ENCODE measurements at regions of chr16 and their contacts with region 1.

Region 1: GRCh38 chr16:8878521-8878911 is 3.6 kb upstream of the LITAFD start:
- DNase-seq: no peak
- ATAC-seq: no peak
- H3K4me3 ChIP-seq: no peak overlapping the region
- H3K4me3 Mint-ChIP-seq: no peak overlapping the region
- H3K27ac ChIP-seq: no peak overlapping the region
- H3K27ac Mint-ChIP-seq: no peak overlapping the region
- H3K4me1 ChIP-seq: peaks cover 9% of the 10 kb centered on the region
- H3K4me1 Mint-ChIP-seq: peaks cover 19% of the 10 kb centered on the region
- H3K27me3 ChIP-seq: no peaks in the 10 kb centered on the region
- H3K27me3 Mint-ChIP-seq: no peaks in the 10 kb centered on the region
- CTCF ChIP-seq: no peak

Region 2: DNA sequence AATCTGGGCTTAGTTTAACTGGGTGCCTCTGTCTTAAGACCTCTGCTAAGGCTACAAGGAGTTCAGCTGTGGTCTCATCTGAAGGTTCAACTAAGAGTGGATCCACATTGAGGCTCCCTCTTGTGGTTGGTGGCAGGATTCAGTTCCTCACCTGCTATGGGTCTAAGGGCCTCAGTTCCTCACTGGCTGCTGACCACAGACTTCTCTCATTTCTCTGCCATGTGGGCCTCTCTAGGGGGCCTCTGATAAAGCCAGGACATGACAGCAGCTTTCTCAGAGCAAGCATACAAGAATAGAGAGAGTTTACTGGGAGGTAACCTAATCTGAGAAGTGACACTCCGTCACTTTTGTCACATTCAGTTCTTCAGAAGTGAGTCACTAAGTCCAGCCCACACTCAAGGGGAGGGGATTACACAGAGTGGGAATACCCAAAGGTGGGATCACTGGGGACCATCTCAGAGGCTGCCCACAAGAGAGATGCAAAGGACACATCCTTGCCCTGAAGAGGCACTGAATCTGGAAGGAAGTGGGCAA is 223.3 kb before region 1 on chr16:
- CTCF ChIA-PET with region 1: interaction called, 13 read pairs
- POLR2A ChIA-PET with region 1: no interaction called
- intact Hi-C with region 1: no loop called
- DNase-seq: peak in 2 of 9 experiments; percentile 24 to 35
- ATAC-seq: no peak
- H3K4me3 ChIP-seq: no peak overlapping the region
- H3K4me3 Mint-ChIP-seq: no peak overlapping the region
- H3K27ac ChIP-seq: no peak overlapping the region
- H3K27ac Mint-ChIP-seq: no peak overlapping the region
- H3K4me1 ChIP-seq: no peaks in the 10 kb centered on the region
- H3K4me1 Mint-ChIP-seq: no peaks in the 10 kb centered on the region
- H3K27me3 ChIP-seq: no peaks in the 10 kb centered on the region
- H3K27me3 Mint-ChIP-seq: no peaks in the 10 kb centered on the region
- CTCF ChIP-seq: no peak

Region 3: GRCh38 chr16:8797364-8798173 is 80.9 kb before region 1 on chr16 and contains the starts of genes PMM2 and TMEM186:
- CTCF ChIA-PET with region 1: interaction called, 10 read pairs
- POLR2A ChIA-PET with region 1: no interaction called
- intact Hi-C with region 1: no loop called
- DNase-seq: peak; percentile 87 to 98 (median 95)
- ATAC-seq: peak; percentile 95
- H3K4me3 ChIP-seq: peak within 1 kb of the TSS; percentile 77 to 97
- H3K4me3 Mint-ChIP-seq: peak within 1 kb of the TSS; percentile 95
- H3K27ac ChIP-seq: peak within 1 kb of the TSS; percentile 78 to 81
- H3K27ac Mint-ChIP-seq: peak within 1 kb of the TSS; percentile 93
- H3K4me1 ChIP-seq: peaks cover 34% of the 10 kb centered on the region
- H3K4me1 Mint-ChIP-seq: peaks cover 46% of the 10 kb centered on the region
- H3K27me3 ChIP-seq: no peaks in the 10 kb centered on the region
- H3K27me3 Mint-ChIP-seq: no peaks in the 10 kb centered on the region
- CTCF ChIP-seq: no peak
- total RNA-seq, gene PMM2: 29.6 to 32.7 TPM
- total RNA-seq, gene TMEM186: 2.4 to 2.9 TPM

Region 4: DNA sequence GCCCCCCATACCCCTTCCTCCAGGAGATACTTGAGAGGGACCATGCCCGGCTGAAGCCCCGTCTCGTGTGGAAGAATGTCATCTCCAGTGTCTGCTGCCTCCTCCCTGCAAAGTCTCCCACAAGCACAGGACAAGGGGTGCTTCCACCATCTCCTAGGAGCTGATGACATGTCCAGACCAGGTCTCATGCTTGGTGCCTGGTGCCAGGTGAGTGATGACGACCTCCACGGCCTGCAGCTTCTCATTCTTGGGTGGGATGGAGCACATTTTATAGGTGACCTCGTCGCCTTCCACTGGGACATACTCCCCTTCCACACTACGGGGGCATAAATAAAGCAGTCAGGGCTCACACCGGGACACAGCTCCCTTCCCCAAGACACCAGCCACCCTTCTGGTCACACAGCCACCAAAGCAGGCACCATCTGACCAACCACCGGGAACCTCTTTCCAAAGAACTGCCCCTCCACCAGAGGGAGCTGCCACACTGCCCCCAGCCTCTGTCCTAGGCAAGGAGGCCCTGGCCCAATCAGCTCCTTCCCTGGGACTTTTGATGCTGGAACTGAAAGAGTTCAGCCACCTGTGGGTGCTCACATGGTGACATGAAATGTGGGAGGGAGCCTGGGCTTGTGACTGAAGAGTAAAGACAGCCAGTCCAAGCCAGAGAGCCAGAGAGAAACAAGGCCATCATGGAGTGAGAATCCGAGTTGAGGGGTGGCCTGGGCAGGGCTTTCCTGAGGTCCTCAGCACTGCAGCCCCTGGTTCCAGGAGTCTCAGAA is 23.3 kb before region 1 on chr16:
- CTCF ChIA-PET with region 1: interaction called, 13 read pairs
- POLR2A ChIA-PET with region 1: no interaction called
- intact Hi-C with region 1: no loop called
- DNase-seq: peak in 1 of 9 experiments; percentile 19
- ATAC-seq: no peak
- H3K4me3 ChIP-seq: no peak overlapping the region
- H3K4me3 Mint-ChIP-seq: no peak overlapping the region
- H3K27ac ChIP-seq: no peak overlapping the region
- H3K27ac Mint-ChIP-seq: peak overlapping the region; percentile 69
- H3K4me1 ChIP-seq: peaks cover 8% of the 10 kb centered on the region
- H3K4me1 Mint-ChIP-seq: peaks cover 42% of the 10 kb centered on the region
- H3K27me3 ChIP-seq: no peaks in the 10 kb centered on the region
- H3K27me3 Mint-ChIP-seq: no peaks in the 10 kb centered on the region
- CTCF ChIP-seq: no peak

Region 5: DNA sequence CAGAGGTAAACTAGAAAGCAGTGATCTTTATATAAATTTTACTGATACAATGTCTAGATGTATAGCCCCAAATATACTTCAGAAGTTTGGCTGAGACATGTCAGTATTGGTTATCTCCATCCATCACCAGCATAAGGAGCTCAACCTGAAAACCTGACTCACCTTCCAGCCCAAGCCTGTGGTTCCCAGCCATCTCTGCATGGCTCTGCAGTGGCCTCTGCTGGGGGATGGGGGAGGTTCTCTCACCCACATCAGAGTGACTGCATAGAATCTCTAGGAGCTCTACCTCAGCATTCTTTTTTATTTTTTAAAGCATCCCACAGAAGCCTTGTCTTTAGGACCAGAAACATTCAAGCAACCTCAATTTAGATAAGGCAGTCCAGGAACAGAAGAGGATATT is 57.9 kb after region 1 on chr16:
- CTCF ChIA-PET with region 1: interaction called, 11 read pairs
- POLR2A ChIA-PET with region 1: no interaction called
- intact Hi-C with region 1: no loop called
- DNase-seq: peak; percentile 35 to 82 (median 75)
- ATAC-seq: peak; percentile 98
- H3K4me3 ChIP-seq: no peak overlapping the region
- H3K4me3 Mint-ChIP-seq: peak overlapping the region; percentile 30
- H3K27ac ChIP-seq: no peak overlapping the region
- H3K27ac Mint-ChIP-seq: peak overlapping the region; percentile 21
- H3K4me1 ChIP-seq: peaks cover 62% of the 10 kb centered on the region
- H3K4me1 Mint-ChIP-seq: peaks cover 87% of the 10 kb centered on the region
- H3K27me3 ChIP-seq: no peaks in the 10 kb centered on the region
- H3K27me3 Mint-ChIP-seq: no peaks in the 10 kb centered on the region
- CTCF ChIP-seq: peak; percentile 74

Region 6: GRCh38 chr16:8963825-8964441 is 85.4 kb after region 1 on chr16 and contains the start of gene USP7:
- CTCF ChIA-PET with region 1: no interaction called
- POLR2A ChIA-PET with region 1: no interaction called
- intact Hi-C with region 1: no loop called
- DNase-seq: peak; percentile 84 to 95 (median 92)
- ATAC-seq: peak; percentile 92
- H3K4me3 ChIP-seq: peak within 1 kb of the TSS; percentile 67 to 73
- H3K4me3 Mint-ChIP-seq: peak within 1 kb of the TSS; percentile 96
- H3K27ac ChIP-seq: peak within 1 kb of the TSS; percentile 72 to 76
- H3K27ac Mint-ChIP-seq: peak within 1 kb of the TSS; percentile 95
- H3K4me1 ChIP-seq: peaks cover 31% of the 10 kb centered on the region
- H3K4me1 Mint-ChIP-seq: peaks cover 38% of the 10 kb centered on the region
- H3K27me3 ChIP-seq: no peaks in the 10 kb centered on the region
- H3K27me3 Mint-ChIP-seq: no peaks in the 10 kb centered on the region
- CTCF ChIP-seq: no peak
- total RNA-seq, gene USP7: 301 to 317 TPM

Measured in CD8-positive, alpha-beta T cell (primary cell).